ENCODE measurements at regions of chr17 and their contacts with region 1.

Region 1: GRCh38 chr17:82418001-82418986 is at the starts of genes HEXD and OGFOD3:
- DNase-seq: peak; percentile 57 to 68
- ATAC-seq: peak; percentile 92 to 93
- H3K4me3 ChIP-seq: peak within 1 kb of the TSS; percentile 71 to 95 (median 83)
- H3K27ac ChIP-seq: peak within 1 kb of the TSS; percentile 85 to 99 (median 97)
- H3K4me1 ChIP-seq: peaks cover 16 to 19% of the 10 kb centered on the region in 2 donors
- H3K27me3 ChIP-seq: no peaks in the 10 kb centered on the region
- CTCF ChIP-seq: peak in 3 of 5 experiments; percentile 10 to 33 (median 15)
- POLR2A ChIP-seq: peak; percentile 54 to 70
- total RNA-seq, gene HEXD: 15.5 to 35.1 (median 22.5) TPM
- total RNA-seq, gene OGFOD3: 25.8 to 72.1 (median 27.7) TPM

Region 2: GRCh38 chr17:82205719-82206508 is 212.4 kb before region 1 on chr17:
- in situ Hi-C with region 1: no loop called
- intact Hi-C with region 1: loop called (anchors 10 kb)
- DNase-seq: peak; percentile 63 to 81
- ATAC-seq: peak; percentile 90 to 92
- H3K4me3 ChIP-seq: peak overlapping the region in 1 of 4 donors; percentile 23
- H3K27ac ChIP-seq: peak overlapping the region; percentile 8 to 71 (median 67)
- H3K4me1 ChIP-seq: peaks cover 5 to 6% of the 10 kb centered on the region in 2 donors
- H3K27me3 ChIP-seq: no peaks in the 10 kb centered on the region
- CTCF ChIP-seq: peak; percentile 91 to 94 (median 92)
- POLR2A ChIP-seq: no peak

Region 3: GRCh38 chr17:82351716-82352488 is 66.4 kb before region 1 on chr17:
- in situ Hi-C with region 1: loop called (anchors 5 to 10 kb)
- intact Hi-C with region 1: loop called (anchors 1 kb)
- DNase-seq: peak; percentile 62 to 72
- ATAC-seq: peak; percentile 74 to 88
- H3K4me3 ChIP-seq: no peak overlapping the region
- H3K27ac ChIP-seq: no peak overlapping the region
- H3K4me1 ChIP-seq: no peaks in the 10 kb centered on the region
- H3K27me3 ChIP-seq: peaks cover 8 to 21% (median 13%) of the 10 kb centered on the region in 3 donors
- CTCF ChIP-seq: peak; percentile 89 to 98 (median 97)
- POLR2A ChIP-seq: no peak

Region 4: DNA sequence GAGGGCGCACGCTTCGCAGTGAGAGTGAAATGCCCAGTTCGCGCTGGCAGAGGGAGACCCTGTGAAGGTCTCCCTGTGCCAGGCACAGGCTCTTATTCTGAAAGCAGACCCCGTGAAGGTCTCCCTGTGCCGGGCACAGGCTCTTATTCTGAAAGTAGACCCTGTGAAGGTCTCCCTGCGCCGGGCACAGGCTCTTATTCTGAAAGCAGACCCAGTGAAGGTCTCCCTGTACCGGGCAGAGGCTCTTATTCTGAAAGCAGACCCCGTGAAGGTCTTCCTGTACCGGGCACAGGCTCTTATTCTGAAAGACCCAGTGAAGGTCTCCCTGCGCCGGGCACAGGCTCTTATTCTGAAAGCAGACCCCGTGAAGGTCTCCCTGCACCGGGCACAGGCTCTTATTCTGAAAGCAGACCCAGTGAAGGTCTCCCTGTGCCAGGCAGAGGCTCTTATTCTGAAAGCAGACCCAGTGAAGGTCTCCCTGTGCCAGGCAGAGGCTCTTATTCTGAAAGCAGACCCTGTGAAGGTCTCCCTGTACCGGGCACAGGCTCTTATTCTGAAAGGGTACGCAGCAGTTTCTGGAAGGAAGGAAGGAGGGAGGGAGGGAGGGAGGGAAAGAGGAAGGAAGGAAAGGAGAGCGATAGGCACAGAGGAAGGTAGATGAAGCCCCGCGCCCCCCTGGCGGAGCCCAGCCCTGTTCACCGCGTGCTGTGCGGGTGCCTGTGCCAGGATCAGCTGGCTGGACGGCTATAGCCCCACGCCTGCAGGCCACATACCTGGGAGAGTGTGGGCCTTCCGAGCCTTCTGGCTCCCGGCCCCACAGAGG is 174.7 kb after region 1 on chr17:
- in situ Hi-C with region 1: no loop called
- intact Hi-C with region 1: loop called (anchors 1 kb)
- DNase-seq: peak; percentile 67 to 87
- ATAC-seq: peak; percentile 72 to 84
- H3K4me3 ChIP-seq: peak overlapping the region; percentile 60 to 80 (median 70)
- H3K27ac ChIP-seq: peak overlapping the region; percentile 87 to 92 (median 88)
- H3K4me1 ChIP-seq: peaks cover 26 to 31% of the 10 kb centered on the region in 2 donors
- H3K27me3 ChIP-seq: no peaks in the 10 kb centered on the region
- CTCF ChIP-seq: no peak
- POLR2A ChIP-seq: no peak